Testis (tissue), 5 donors: ENCODE measurements at regions of chr12 and their contacts with region 1.

Region 1: DNA sequence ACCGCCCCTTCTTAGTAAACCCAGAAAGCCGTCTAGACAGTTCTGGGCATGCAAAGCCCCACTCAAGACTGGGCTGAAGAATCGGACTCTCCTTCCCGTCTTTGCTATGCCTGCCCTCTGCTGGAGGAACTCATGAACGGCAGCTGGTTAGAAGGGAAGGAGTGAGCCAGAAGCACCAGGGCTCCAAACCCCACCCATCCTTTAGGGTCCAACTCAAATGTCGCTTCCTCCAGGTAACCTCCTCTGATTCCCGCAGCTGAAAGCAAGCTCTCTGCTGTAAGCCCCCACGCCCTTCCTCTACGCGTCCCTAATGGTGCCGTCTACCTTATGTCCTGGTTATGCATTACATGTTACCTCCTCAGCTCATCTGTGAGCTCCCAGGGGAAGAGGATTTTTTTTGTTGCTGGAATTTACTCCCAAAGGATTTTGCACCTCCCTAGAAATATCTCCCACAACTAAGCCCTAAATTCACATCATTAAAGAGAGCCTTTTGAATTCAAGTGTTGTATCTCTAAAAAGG is 59.0 kb upstream of the SCN8A start:
- DNase-seq: peak; percentile 88
- H3K4me3 ChIP-seq: no peak overlapping the region
- H3K27ac ChIP-seq: no peak overlapping the region
- H3K4me1 ChIP-seq: no peaks in the 10 kb centered on the region
- H3K27me3 ChIP-seq: no peaks in the 10 kb centered on the region
- CTCF ChIP-seq: peak; percentile 81 to 86 (median 86)
- POLR2A ChIP-seq: no peak

Region 2: GRCh38 chr12:51424662-51425438 is 107.2 kb before region 1 on chr12 and contains the start of gene SLC4A8:
- intact Hi-C with region 1: loop called (anchors 5 kb)
- DNase-seq: peak; percentile 95
- H3K4me3 ChIP-seq: peak within 1 kb of the TSS; percentile 50 to 73
- H3K27ac ChIP-seq: peak within 1 kb of the TSS; percentile 63 to 64
- H3K4me1 ChIP-seq: no peaks in the 10 kb centered on the region
- H3K27me3 ChIP-seq: no peaks in the 10 kb centered on the region
- CTCF ChIP-seq: peak; percentile 53 to 78 (median 72)
- POLR2A ChIP-seq: no peak
- total RNA-seq, gene SLC4A8: 63.7 to 78.6 TPM

Region 3: DNA sequence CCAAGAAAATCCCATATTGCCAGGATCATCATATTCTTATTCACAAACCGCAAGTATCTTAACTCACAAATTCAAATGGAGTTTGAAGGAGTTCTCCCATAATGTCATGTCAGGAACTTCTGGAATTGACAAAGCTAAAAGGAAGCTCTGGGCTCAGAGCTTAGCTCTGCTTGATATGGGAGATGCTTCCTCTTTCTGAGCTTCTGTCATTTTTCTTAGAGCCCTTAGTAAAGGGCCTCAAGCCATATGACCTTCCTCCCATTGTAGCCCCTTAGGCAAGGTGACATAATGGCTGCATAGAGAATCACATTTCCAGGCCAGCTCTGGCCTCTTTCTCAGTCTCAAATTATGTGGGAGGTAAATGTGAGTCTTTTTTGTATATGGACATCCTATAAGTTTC is 66.5 kb before region 1 on chr12:
- intact Hi-C with region 1: no loop called
- DNase-seq: no peak
- H3K4me3 ChIP-seq: no peak overlapping the region
- H3K27ac ChIP-seq: no peak overlapping the region
- H3K4me1 ChIP-seq: no peaks in the 10 kb centered on the region
- H3K27me3 ChIP-seq: no peaks in the 10 kb centered on the region
- CTCF ChIP-seq: no peak
- POLR2A ChIP-seq: no peak